Heart left ventricle (tissue), 16 donors: ENCODE measurements at regions of chr3 and their contacts with region 1.

Region 1: GRCh38 chr3:128845778-128846485 is 33.5 kb upstream of the ACAD9 start:
- DNase-seq: peak; percentile 87 to 94 (median 92)
- ATAC-seq: peak; percentile 80 to 97 (median 94)
- H3K4me3 ChIP-seq: peak overlapping the region; percentile 14 to 60 (median 50)
- H3K27ac ChIP-seq: peak overlapping the region; percentile 51 to 91 (median 79)
- H3K4me1 ChIP-seq: peaks cover 0 to 21% (median 9%) of the 10 kb centered on the region in 12 donors
- H3K27me3 ChIP-seq: no peaks in the 10 kb centered on the region
- CTCF ChIP-seq: peak; percentile 46 to 77 (median 64)
- POLR2A ChIP-seq: no peak

Region 2: DNA sequence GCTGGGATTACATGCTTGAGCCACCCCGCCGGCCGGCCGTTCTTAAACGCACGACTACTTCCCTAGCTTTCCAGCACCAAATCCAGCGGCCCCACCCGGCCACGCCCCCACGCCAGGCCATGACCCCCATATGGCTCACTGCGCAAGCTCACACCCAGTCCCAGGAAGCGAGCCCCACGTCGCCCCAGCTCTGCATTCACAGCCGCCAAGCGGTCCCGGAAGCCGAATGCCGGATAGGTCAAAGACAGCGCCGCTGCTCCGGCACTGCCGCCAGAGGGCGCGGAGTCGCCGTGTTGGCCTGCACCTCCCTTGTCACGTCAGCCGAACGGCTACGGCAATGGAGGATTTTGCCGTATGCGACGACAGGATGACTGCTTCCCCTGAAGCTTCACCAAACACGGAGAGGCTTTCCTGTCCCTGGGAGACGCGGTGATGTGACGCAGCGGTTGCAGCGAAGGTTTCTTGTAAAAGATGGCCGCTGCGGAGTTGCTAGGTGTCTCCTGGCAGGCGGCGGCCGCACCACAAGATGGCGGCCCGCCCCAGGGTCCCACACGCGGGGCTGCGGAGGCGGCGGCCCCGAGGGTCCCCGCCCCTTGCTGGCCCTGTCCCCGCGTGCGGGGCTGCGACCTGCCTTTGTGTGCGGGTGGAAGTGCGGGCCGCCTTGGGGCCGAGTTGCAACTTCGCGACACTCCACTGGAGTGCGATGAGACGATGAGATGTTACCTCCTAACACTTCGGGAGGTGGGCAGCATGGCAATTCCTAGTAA is 165.1 kb before region 1 on chr3:
- intact Hi-C with region 1: loop called in 9 of 10 experiments (anchors 1 to 10 kb)
- DNase-seq: peak; percentile 99 to 100 (median 100)
- ATAC-seq: peak; percentile 100
- H3K4me3 ChIP-seq: peak overlapping the region; percentile 45 to 82 (median 70)
- H3K27ac ChIP-seq: peak overlapping the region; percentile 92 to 98 (median 96)
- H3K4me1 ChIP-seq: peaks cover 0 to 24% (median 7%) of the 10 kb centered on the region in 12 donors
- H3K27me3 ChIP-seq: no peaks in the 10 kb centered on the region
- CTCF ChIP-seq: peak; percentile 94 to 99 (median 96)
- POLR2A ChIP-seq: peak in 1 of 2 donors; percentile 68

Region 3: DNA sequence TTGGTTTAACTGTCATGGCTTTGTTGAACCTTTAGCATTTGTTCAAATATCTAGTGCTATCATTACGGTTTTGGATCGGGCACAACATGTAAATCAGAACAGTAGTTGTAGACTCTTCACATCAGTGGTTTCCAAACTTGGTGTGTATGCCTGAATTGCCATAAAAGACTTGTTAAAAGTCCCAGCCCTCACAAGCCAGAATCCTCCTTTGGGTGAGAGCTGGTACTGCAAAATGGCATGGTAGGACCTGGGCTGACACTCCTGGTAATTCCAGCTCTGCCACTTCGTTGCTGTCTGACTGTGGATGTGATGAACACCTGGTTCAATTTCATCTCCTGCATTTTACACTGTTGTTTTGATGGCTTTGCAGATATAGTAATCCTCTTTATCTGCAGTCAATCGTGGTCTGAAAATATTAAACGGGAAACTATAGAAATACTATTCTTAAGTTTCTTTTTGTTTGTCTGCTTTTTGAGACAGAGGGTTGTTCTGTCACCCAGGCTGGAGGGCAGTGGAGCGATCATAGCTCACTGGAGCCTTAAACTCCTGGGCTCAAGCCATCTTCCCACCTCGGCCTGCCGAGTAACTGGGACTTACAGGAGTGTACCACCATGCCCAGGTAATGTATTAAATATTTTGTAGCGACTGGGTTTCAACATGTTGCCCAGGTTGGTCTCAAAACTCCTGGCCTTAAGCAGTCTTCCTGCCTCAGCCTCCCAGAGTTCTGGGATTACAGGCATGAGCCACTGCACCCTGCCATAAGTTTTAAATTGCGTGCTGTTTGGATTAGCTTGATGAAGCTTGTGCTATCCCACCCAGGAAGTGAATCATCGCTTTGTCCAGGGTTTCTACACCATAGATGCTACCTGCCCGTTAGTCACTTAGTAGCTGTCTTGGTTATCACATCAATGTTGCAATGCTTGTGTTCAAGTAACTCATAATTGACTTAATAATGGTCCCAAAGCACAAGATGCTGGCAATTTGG is 58.4 kb before region 1 on chr3:
- intact Hi-C with region 1: loop called in 4 of 10 experiments (anchors 1 to 10 kb)
- DNase-seq: no peak
- ATAC-seq: no peak
- H3K4me3 ChIP-seq: no peak overlapping the region
- H3K27ac ChIP-seq: peak overlapping the region in 6 of 12 donors; percentile 1 to 80 (median 52)
- H3K4me1 ChIP-seq: peaks cover 4 to 97% (median 75%) of the 10 kb centered on the region in 12 donors
- H3K27me3 ChIP-seq: no peaks in the 10 kb centered on the region
- CTCF ChIP-seq: peak in 6 of 12 donors; percentile 7 to 27 (median 14)
- POLR2A ChIP-seq: no peak

Region 4: GRCh38 chr3:128794770-128795649 is 50.9 kb before region 1 on chr3:
- intact Hi-C with region 1: loop called in 5 of 10 experiments (anchors 5 to 10 kb)
- DNase-seq: peak in 3 of 5 donors; percentile 59 to 61 (median 59)
- ATAC-seq: peak; percentile 78 to 94 (median 92)
- H3K4me3 ChIP-seq: no peak overlapping the region
- H3K27ac ChIP-seq: peak overlapping the region in 8 of 12 donors; percentile 44 to 71 (median 56)
- H3K4me1 ChIP-seq: peaks cover 0 to 69% (median 38%) of the 10 kb centered on the region in 12 donors
- H3K27me3 ChIP-seq: no peaks in the 10 kb centered on the region
- CTCF ChIP-seq: peak; percentile 71 to 88 (median 80)
- POLR2A ChIP-seq: no peak

Region 5: GRCh38 chr3:128804017-128804810 is 41.7 kb before region 1 on chr3:
- intact Hi-C with region 1: loop called in 4 of 10 experiments (anchors 5 to 10 kb)
- DNase-seq: no peak
- ATAC-seq: peak in 2 of 4 donors; percentile 26 to 57
- H3K4me3 ChIP-seq: peak overlapping the region in 9 of 12 donors; percentile 2 to 49 (median 32)
- H3K27ac ChIP-seq: peak overlapping the region; percentile 53 to 91 (median 86)
- H3K4me1 ChIP-seq: peaks cover 0 to 94% (median 72%) of the 10 kb centered on the region in 12 donors
- H3K27me3 ChIP-seq: no peaks in the 10 kb centered on the region
- CTCF ChIP-seq: no peak
- POLR2A ChIP-seq: no peak

Region 6: GRCh38 chr3:128895843-128896697 is 50.1 kb after region 1 on chr3:
- intact Hi-C with region 1: no loop called
- DNase-seq: no peak
- ATAC-seq: no peak
- H3K4me3 ChIP-seq: no peak overlapping the region
- H3K27ac ChIP-seq: no peak overlapping the region
- H3K4me1 ChIP-seq: peaks cover 0 to 8% (median 0%) of the 10 kb centered on the region in 12 donors
- H3K27me3 ChIP-seq: no peaks in the 10 kb centered on the region
- CTCF ChIP-seq: no peak
- POLR2A ChIP-seq: no peak